ENCODE measurements at regions of chr1 and their contacts with region 1.

Region 1: DNA sequence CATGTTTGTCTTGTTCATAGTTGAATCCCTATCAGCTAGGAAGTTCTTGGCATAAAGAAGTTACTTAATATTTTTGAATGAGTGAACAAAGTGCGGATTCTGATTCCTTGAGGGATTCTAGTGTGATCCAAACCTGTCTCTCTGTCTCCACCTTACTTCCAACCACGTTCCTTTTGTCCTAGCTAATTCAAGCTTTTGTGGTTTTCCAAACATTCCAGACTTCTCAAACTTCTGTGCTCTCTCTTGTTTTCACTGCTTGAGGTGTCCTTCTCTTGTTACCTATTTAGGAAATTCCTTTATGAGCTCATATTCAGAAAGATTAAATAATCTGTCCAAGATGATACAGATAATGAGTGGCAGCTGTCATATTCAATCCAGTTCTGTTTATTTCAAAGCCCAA is 353.2 kb downstream of the PTBP2 start:
- DNase-seq: no peak
- H3K4me3 Mint-ChIP-seq: no peak overlapping the region
- H3K27ac Mint-ChIP-seq: no peak overlapping the region
- H3K4me1 Mint-ChIP-seq: no peaks in the 10 kb centered on the region
- H3K27me3 Mint-ChIP-seq: no peaks in the 10 kb centered on the region

Region 2: DNA sequence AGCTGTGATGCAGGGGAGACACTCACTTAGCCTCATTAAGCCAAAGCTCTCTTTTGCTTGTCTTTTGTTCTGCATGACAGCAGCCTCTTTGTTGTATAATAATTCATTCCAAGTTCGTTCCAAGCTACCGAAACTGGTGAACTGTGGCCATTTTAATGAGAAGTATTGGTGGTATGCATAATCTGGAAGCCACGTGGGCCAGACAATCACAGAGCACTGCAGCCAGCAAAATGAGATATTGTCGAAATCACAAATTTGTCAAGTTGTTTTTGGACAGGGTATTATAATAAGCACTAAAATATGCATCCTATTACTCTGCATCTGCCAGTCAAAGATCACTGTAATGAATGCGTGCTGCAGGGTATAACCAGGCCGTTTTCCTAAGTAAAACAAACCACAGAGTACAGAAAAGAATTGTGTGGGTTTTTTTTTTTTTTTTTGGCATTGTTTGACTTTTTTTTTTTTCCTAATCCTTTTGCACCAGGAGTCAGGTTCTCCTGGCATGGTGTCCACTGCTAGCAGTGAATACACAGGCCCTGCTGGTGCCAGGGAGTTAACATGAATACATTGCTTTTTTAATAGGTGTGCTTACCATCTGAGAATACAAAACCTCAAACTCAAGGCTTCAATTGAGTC is 70.7 kb after region 1 on chr1:
- CTCF ChIA-PET with region 1: interaction called, 10 read pairs
- intact Hi-C with region 1: no loop called
- DNase-seq: no peak
- H3K4me3 Mint-ChIP-seq: no peak overlapping the region
- H3K27ac Mint-ChIP-seq: no peak overlapping the region
- H3K4me1 Mint-ChIP-seq: no peaks in the 10 kb centered on the region
- H3K27me3 Mint-ChIP-seq: no peaks in the 10 kb centered on the region